ENCODE measurements at regions of chr2 and their contacts with region 1.

Region 1: DNA sequence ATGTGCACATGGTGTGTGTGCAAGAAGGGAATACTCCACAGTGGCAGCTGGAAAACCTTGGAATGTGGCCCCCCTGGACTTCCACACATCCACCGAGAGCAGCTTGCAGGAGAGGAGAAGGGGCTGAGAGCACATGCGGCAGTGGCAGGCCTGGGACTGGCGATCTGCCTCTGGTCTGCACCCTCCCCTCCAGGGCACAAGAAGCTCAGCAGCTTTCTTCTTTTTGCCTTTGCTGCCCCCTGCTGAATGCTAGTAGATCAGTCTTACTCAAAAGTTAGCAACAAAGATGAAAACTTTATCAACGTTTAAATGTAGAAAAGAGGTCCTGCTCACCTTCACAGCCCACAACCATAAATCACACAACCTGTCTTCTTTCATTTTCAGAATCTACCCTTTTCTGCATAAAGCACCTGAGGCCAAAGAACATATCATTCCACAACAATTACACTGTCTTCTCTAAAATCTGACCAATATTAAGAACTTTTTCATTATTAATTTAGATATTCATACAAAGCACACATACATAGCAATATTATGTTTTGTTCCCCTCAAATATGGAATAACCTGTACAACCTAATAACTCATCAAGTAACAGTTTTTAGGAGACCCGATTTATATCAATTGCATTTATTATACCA is 34.6 kb downstream of the TGFBRAP1 start:
- DNase-seq: peak; percentile 67
- ATAC-seq: peak; percentile 80
- H3K4me3 ChIP-seq: no peak overlapping the region
- H3K27ac ChIP-seq: no peak overlapping the region
- H3K4me1 ChIP-seq: no peaks in the 10 kb centered on the region
- H3K27me3 ChIP-seq: no peaks in the 10 kb centered on the region
- CTCF ChIP-seq: peak; percentile 75

Region 2: GRCh38 chr2:105125428-105125827 is 169.5 kb before region 1 on chr2:
- CTCF ChIA-PET with region 1: no interaction called
- POLR2A ChIA-PET with region 1: no interaction called
- intact Hi-C with region 1: no loop called
- DNase-seq: no peak
- ATAC-seq: no peak
- H3K4me3 ChIP-seq: no peak overlapping the region
- H3K27ac ChIP-seq: no peak overlapping the region
- H3K4me1 ChIP-seq: no peaks in the 10 kb centered on the region
- H3K27me3 ChIP-seq: peaks cover 18% of the 10 kb centered on the region
- CTCF ChIP-seq: peak; percentile 36; the same call in 1 of the 2 replicates

Region 3: DNA sequence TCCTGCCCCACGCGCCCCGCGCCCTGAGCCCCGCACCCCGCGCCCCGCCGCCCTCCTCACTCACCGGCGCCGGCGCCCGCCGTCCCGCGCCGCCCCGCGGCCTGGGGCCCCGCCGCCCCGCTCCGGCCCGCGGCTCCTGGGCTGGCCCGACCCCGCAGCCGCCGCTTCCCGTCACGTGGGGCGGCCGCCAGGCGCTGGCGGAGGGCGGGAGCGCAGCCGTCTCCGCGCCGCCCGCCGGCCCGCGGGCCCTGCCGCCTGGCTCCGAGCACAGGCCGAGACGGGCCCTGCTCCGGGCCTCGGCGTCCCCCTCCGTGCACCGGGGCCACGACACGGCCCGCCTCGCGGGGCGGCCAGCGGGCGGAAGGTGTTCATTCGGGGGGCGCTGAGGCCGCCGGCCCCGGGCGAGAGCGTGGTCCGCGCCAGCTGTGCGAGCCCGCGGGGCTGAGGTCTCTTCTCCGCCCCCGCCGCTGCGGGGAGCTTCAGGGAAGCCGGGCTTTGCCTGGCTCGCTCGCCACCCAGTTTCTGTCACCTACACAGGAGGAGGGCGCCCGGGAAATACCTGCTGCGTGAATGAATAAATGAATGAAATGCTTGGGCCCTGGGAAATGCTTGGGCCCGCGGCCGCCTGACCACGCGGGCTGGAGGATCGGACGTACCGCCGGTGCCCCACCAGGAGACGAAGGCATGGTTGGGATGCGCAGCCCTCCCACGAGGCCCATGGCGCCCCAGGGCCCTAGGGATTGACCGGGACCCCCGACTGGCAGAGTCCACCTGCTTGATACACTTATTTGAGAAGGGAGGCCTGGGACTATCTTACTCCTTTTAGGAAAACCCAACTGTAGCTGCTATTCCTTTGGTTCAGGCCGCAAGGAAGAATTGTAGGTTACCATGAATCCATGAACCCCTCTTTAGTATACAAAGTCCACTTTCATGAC is 34.9 kb after region 1 on chr2 and contains the start of gene TGFBRAP1:
- CTCF ChIA-PET with region 1: no interaction called
- POLR2A ChIA-PET with region 1: no interaction called
- intact Hi-C with region 1: loop called (anchors 5 kb)
- DNase-seq: peak; percentile 56
- ATAC-seq: peak; percentile 67
- H3K4me3 ChIP-seq: peak within 1 kb of the TSS; percentile 76
- H3K27ac ChIP-seq: peak within 1 kb of the TSS; percentile 35
- H3K4me1 ChIP-seq: peaks cover 53% of the 10 kb centered on the region
- H3K27me3 ChIP-seq: no peaks in the 10 kb centered on the region
- CTCF ChIP-seq: no peak
- total RNA-seq, gene TGFBRAP1: 26.5 and 27.3 TPM in 2 replicates

Region 4: DNA sequence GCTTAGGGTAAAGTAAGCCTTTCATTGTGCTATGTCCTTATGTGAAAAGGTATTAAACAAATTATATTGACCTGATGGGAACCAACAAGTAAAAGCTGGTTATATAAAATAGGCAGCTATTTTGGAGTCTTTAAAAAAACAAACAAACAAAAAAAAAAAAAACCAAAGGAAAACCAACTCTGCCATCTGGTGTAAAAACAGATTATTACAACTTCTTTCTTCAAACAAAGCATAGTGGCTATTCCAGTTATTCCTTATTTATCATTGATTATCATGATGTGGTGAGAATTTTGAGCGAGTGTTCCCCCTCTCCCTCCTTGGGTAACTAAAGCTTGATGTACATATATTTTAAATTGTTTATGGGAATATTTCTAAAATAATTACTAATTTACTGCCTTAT is 226.2 kb after region 1 on chr2:
- CTCF ChIA-PET with region 1: no interaction called
- POLR2A ChIA-PET with region 1: no interaction called
- intact Hi-C with region 1: no loop called
- DNase-seq: peak; percentile 67
- ATAC-seq: no peak
- H3K4me3 ChIP-seq: no peak overlapping the region
- H3K27ac ChIP-seq: no peak overlapping the region
- H3K4me1 ChIP-seq: no peaks in the 10 kb centered on the region
- H3K27me3 ChIP-seq: no peaks in the 10 kb centered on the region
- CTCF ChIP-seq: peak; percentile 88